ENCODE measurements at regions of chr7 and their contacts with region 1.

Region 1: DNA sequence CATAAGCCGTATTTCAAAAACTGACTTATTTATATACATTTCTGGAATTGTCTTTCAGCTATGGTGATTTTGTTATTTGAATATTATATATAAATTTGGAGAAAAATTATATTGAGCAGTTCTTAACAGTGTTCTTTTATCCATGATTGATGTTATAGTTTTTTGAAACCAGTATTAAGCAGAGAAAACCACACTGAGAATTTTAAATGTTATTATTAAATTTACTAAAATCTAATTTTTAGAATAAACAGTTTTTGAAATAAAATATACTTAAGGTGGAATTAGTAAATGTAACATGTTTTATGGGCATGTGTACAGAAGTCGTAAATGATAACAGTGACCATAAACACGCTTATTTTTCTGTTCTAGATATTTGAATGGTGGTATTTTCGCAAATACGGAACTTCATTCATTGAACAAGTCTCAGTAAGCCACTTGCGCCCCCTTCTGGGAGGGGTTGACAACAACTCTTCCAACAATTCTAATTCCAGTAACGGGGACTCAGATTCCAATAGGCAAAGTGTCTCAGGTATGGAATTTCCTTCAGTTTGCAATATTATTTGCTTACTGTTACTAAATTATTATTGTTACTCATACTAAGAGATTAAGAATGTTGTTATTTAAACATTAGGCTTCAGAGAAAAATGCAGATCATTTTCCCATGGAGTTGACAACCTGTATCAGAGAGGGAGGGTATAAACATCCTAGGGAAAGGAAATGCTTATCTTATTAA is 166.1 kb downstream of the ST7 start:
- DNase-seq: peak; percentile 91
- H3K4me3 ChIP-seq: no peak overlapping the region
- H3K27ac ChIP-seq: no peak overlapping the region
- H3K4me1 ChIP-seq: no peaks in the 10 kb centered on the region
- H3K27me3 ChIP-seq: no peaks in the 10 kb centered on the region
- CTCF ChIP-seq: peak; percentile 79 to 84 (median 80)
- POLR2A ChIP-seq: no peak

Region 2: GRCh38 chr7:116929914-116930913 is 189.1 kb before region 1 on chr7:
- intact Hi-C with region 1: loop called (anchors 10 kb)
- DNase-seq: peak; percentile 94
- H3K4me3 ChIP-seq: no peak overlapping the region
- H3K27ac ChIP-seq: no peak overlapping the region
- H3K4me1 ChIP-seq: no peaks in the 10 kb centered on the region
- H3K27me3 ChIP-seq: no peaks in the 10 kb centered on the region
- CTCF ChIP-seq: peak; percentile 88 to 96 (median 92)
- POLR2A ChIP-seq: no peak

Region 3: GRCh38 chr7:116984917-116985316 is 134.4 kb before region 1 on chr7:
- intact Hi-C with region 1: loop called (anchors 10 kb)
- DNase-seq: no peak
- H3K4me3 ChIP-seq: no peak overlapping the region
- H3K27ac ChIP-seq: no peak overlapping the region
- H3K4me1 ChIP-seq: no peaks in the 10 kb centered on the region
- H3K27me3 ChIP-seq: no peaks in the 10 kb centered on the region
- CTCF ChIP-seq: peak; percentile 18 to 63 (median 46)
- POLR2A ChIP-seq: no peak

Measured in testis (tissue), 5 donors.